Activated CD4-positive, alpha-beta T cell treated with anti-CD3 and anti-CD28 coated beads, Interleukin-2, amount 10 ng/mL, durations not matched to agents 24 days and 14 days (primary cell): ENCODE measurements at regions of chr2 and their contacts with region 1.

Region 1: GRCh38 chr2:177148477-177149154 is 64.0 kb upstream of the HNRNPA3 start:
- DNase-seq: peak; percentile 93
- H3K4me3 Mint-ChIP-seq: peak overlapping the region; percentile 89
- H3K27ac Mint-ChIP-seq: no peak overlapping the region
- H3K4me1 Mint-ChIP-seq: peaks cover 11% of the 10 kb centered on the region
- H3K27me3 Mint-ChIP-seq: peaks cover 58% of the 10 kb centered on the region

Region 2: DNA sequence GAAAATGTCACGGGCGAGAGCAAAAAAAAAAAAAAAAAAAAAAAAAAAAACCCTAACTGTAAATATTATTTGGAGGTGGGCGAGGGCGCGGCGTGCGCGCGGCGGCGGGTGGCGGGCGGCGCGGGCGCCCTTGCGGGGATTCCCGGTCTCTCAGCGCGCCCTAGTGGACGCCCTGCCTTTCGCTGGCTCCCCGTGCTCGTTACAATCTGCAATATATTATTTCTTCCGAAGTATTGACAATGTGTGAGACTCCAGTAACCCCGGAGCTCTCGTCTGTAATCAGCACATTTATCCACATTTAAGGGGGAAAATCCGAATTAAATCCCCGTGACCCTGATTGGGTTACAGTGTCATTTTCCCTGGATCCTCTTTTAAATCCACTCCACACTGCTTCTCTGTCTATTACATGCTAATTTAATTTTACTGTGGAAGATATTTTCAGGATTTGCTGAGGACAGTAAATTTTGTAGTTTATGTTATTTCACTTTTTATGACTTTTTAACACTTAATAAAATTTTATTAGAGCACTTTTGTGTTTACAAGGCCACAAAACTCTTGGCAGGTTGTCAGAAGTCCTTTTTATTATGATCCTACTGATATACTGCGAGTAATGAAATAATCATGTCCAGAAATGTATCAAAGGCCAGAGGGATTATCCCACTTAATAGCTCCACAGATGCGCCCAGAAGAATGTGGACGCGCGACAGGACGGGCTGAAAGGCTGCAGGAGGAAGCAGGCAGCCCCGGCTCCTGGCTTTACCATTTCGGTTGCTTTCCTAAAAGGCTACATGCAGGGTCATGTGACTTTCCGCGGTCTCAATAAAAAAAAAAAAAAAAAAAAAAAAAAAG is 510.2 kb before region 1 on chr2:
- intact Hi-C with region 1: loop called (anchors 5 kb)
- DNase-seq: peak; percentile 87
- H3K4me3 Mint-ChIP-seq: peak overlapping the region; percentile 77
- H3K27ac Mint-ChIP-seq: no peak overlapping the region
- H3K4me1 Mint-ChIP-seq: peaks cover 5% of the 10 kb centered on the region
- H3K27me3 Mint-ChIP-seq: peaks cover 62% of the 10 kb centered on the region

Region 3: GRCh38 chr2:176653479-176654443 is 494.9 kb before region 1 on chr2:
- intact Hi-C with region 1: loop called (anchors 5 kb)
- DNase-seq: peak; percentile 69
- H3K4me3 Mint-ChIP-seq: no peak overlapping the region
- H3K27ac Mint-ChIP-seq: no peak overlapping the region
- H3K4me1 Mint-ChIP-seq: peaks cover 10% of the 10 kb centered on the region
- H3K27me3 Mint-ChIP-seq: peaks cover 46% of the 10 kb centered on the region

Region 4: GRCh38 chr2:176814306-176815052 is 334.1 kb before region 1 on chr2:
- intact Hi-C with region 1: loop called (anchors 2 kb)
- DNase-seq: peak; percentile 61
- H3K4me3 Mint-ChIP-seq: no peak overlapping the region
- H3K27ac Mint-ChIP-seq: no peak overlapping the region
- H3K4me1 Mint-ChIP-seq: peaks cover 8% of the 10 kb centered on the region
- H3K27me3 Mint-ChIP-seq: peaks cover 3% of the 10 kb centered on the region

Region 5: DNA sequence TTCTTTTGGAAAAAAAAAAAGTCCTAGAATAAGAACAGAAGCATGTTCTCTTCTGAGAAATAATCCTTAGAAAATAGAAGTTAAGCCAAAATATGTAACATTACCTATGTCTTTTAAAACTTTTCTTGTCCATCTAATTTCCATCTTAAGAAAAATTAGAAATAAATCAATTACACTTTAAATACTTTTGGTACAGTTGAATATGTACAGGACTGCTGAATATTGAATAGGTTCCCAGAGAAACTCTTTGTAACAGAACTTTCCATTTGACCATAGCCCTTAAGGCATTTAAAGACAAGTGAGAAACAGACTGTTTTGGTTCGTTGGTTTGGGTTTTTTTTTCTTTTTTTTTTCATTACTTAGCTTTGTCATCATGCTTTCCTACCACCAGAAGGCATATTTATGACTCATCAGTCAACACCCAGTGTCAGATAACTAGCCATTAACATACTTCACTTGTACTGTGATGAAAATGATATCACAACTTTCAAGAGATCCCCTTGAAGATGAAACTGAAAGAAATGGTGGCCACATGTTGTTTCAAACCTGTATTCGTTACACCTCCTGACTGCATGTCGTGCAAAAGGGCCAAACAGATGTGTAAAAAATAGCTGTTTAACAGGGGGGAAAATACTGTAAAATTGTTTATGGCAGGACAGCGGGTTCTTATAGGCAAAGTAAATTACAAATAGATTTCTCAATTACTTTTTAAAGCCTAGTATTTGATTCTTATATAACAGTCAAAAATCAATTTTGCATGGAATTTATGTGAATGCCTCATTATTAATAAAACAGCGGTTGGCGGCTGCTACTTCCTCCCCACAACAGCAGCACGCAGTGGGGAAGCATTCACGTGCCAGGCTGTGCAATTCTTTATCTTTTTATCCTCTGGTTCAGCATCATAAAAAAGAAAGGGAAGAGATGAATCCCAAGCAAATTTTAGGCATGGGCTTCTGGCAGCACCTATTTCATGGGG is 216.7 kb before region 1 on chr2:
- intact Hi-C with region 1: loop called (anchors 5 kb)
- DNase-seq: peak; percentile 80
- H3K4me3 Mint-ChIP-seq: peak overlapping the region; percentile 37
- H3K27ac Mint-ChIP-seq: peak overlapping the region; percentile 85
- H3K4me1 Mint-ChIP-seq: peaks cover 15% of the 10 kb centered on the region
- H3K27me3 Mint-ChIP-seq: no peaks in the 10 kb centered on the region

Region 6: DNA sequence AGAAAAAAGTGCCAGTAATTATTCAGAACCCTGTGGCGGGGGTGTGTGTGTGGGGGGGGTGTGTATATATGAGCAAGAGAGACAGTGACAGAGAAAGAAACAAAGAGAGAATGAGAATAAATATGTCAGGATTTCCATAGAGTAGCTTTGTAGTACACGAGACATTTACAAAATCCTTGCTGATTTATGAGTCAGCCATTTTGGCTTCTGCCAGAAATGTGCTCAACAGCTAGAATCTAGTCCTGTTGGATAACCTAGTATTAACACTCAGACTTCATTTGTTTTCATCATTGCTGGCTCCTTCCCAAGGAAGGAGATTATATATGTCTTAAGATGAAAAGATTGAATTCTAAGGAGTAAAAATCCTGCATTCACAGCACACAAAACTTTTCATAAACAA is 76.5 kb before region 1 on chr2:
- intact Hi-C with region 1: no loop called
- DNase-seq: no peak
- H3K4me3 Mint-ChIP-seq: no peak overlapping the region
- H3K27ac Mint-ChIP-seq: no peak overlapping the region
- H3K4me1 Mint-ChIP-seq: no peaks in the 10 kb centered on the region
- H3K27me3 Mint-ChIP-seq: peaks cover 11% of the 10 kb centered on the region